Caco-2 (cell line): ENCODE measurements at regions of chr12 and their contacts with region 1.

Region 1: DNA sequence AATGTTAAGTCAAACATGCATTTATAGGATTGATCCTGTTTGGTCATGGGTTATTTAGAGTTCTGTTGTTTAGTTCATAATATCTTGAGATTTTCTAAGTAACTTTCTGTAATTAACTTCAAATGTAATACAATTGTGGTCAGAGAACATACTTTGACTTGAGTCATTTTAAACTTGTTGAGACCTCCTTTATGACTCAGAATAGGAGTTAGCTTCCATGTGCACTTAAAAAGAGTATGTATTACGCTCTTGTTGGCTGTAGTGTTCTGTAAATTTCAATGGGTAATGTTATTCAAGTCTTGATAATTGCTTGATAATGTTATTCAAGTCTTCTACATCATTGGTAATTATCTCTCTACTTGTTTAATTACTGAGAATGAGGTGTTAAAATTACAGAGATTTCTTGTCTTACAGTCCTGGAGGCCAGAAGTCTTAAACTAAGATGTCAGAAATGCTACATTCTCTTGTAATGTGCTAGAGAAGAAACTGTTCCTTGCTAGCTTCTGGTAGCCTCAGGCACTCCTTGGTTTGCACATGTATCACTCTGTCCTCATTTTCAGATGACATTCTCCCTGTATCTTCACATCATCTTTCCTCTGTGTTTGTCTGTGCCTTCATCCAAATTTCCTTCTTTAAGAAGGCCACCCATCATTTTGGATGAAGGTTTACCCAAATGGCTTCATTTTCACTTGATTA is 197.3 kb downstream of the TMTC3 start:
- DNase-seq: no peak
- H3K4me3 ChIP-seq: no peak overlapping the region
- H3K4me3 Mint-ChIP-seq: no peak overlapping the region
- H3K27ac Mint-ChIP-seq: no peak overlapping the region
- H3K4me1 ChIP-seq: no peaks in the 10 kb centered on the region
- H3K4me1 Mint-ChIP-seq: peaks cover 6% of the 10 kb centered on the region
- H3K27me3 ChIP-seq: no peaks in the 10 kb centered on the region
- H3K27me3 Mint-ChIP-seq: no peaks in the 10 kb centered on the region
- CTCF ChIP-seq: no peak

Region 2: DNA sequence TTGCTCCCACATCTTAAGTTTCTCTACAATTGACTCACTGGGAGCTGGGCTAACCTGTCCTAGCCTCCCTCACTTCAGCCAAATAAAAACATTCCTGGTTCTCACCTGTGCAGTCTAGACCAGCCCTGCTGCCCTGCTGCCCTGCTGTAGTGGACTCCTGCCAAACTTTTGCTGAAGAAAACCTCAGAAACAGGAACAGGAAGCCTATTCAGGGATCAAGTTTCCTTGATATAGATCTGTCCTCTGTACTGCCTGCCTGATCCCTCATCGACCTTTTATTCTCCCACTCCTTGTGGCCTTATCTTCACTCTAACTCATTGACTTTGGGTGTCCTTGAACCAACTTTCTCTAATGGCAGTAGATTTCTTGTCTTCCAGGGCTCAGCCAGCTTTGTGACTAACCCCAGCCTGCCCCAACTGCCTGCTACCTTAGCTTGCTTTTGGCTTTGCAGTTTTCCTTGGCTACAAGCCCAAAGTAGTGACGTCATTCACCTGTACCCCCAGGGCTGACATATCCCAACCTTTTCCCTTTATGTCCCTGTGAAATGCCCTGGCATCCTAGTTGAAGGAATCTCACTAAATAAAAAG is 778.1 kb after region 1 on chr12:
- CTCF ChIA-PET with region 1: no interaction called
- POLR2A ChIA-PET with region 1: no interaction called
- intact Hi-C with region 1: loop called (anchors 5 kb)
- DNase-seq: no peak
- H3K4me3 ChIP-seq: no peak overlapping the region
- H3K4me3 Mint-ChIP-seq: no peak overlapping the region
- H3K27ac Mint-ChIP-seq: peak overlapping the region; percentile 44
- H3K4me1 ChIP-seq: no peaks in the 10 kb centered on the region
- H3K4me1 Mint-ChIP-seq: peaks cover 7% of the 10 kb centered on the region
- H3K27me3 ChIP-seq: no peaks in the 10 kb centered on the region
- H3K27me3 Mint-ChIP-seq: no peaks in the 10 kb centered on the region
- CTCF ChIP-seq: no peak